ENCODE measurements at regions of chr6 and their contacts with region 1.

Region 1: GRCh38 chr6:8219352-8219943 is 117.1 kb upstream of the EEF1E1 start:
- DNase-seq: peak; percentile 73
- H3K4me3 ChIP-seq: no peak overlapping the region
- H3K27ac ChIP-seq: no peak overlapping the region
- H3K4me1 ChIP-seq: peaks cover 3% of the 10 kb centered on the region
- H3K27me3 ChIP-seq: no peaks in the 10 kb centered on the region
- CTCF ChIP-seq: peak; percentile 81

Region 2: GRCh38 chr6:8131256-8131897 is 88.1 kb before region 1 on chr6:
- CTCF ChIA-PET with region 1: interaction called, 42 read pairs
- POLR2A ChIA-PET with region 1: no interaction called
- intact Hi-C with region 1: loop called (anchors 1 kb)
- DNase-seq: peak; percentile 89
- H3K4me3 ChIP-seq: no peak overlapping the region
- H3K27ac ChIP-seq: peak overlapping the region; percentile 22
- H3K4me1 ChIP-seq: peaks cover 25% of the 10 kb centered on the region
- H3K27me3 ChIP-seq: no peaks in the 10 kb centered on the region
- CTCF ChIP-seq: peak; percentile 81